ENCODE measurements at regions of chr10 and their contacts with region 1.

Region 1: GRCh38 chr10:5434017-5434753 is 21.8 kb downstream of the NET1 start:
- DNase-seq: peak; percentile 31
- CTCF ChIP-seq: peak; percentile 66

Region 2: GRCh38 chr10:5305374-5305773 is 128.8 kb before region 1 on chr10:
- CTCF ChIA-PET with region 1: no interaction called
- POLR2A ChIA-PET with region 1: no interaction called
- DNase-seq: no peak
- CTCF ChIP-seq: no peak

Region 3: GRCh38 chr10:5416981-5417380 is 17.2 kb before region 1 on chr10:
- CTCF ChIA-PET with region 1: interaction called, 19 read pairs
- POLR2A ChIA-PET with region 1: no interaction called
- DNase-seq: no peak
- CTCF ChIP-seq: no peak

Region 4: GRCh38 chr10:5423771-5424170 is 10.4 kb before region 1 on chr10:
- CTCF ChIA-PET with region 1: interaction called, 47 read pairs
- POLR2A ChIA-PET with region 1: no interaction called
- DNase-seq: no peak
- CTCF ChIP-seq: no peak

Region 5: DNA sequence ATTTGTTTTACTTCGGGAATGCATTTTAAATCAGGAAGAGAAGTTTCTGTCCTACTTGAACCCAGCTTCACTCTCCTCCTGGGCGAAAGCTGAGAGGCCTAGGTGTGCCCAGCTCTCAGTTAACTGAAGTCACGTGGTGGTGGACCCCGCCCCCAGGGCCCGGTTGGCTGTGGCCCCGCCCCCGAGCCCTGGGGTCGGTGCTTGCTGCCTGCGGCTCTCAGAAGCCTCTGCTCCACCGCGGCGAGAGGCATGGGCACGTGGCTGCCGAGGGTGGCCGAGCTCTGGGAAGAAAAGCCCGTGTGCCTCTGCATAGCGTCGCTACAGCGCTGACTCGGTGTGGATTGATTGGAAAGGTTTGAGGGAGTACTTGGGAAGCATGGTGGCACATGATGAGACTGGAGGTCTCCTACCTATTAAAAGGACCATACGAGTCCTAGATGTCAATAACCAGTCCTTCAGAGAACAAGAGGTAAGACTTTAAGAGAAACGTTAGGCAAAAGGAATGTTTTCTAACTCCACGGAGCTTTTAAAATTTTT is 12.3 kb after region 1 on chr10:
- CTCF ChIA-PET with region 1: interaction called, 57 read pairs
- POLR2A ChIA-PET with region 1: no interaction called
- DNase-seq: peak; percentile 58
- CTCF ChIP-seq: no peak

Measured in GM10248 (cell line).